ENCODE measurements at regions of chr2 and their contacts with region 1.

Region 1: GRCh38 chr2:235766278-235766677 is 272.4 kb downstream of the AGAP1 start:
- DNase-seq: peak in 4 of 5 donors; percentile 77 to 94 (median 85)
- H3K4me3 ChIP-seq: no peak overlapping the region
- H3K27ac ChIP-seq: no peak overlapping the region
- H3K4me1 ChIP-seq: no peaks in the 10 kb centered on the region
- H3K27me3 ChIP-seq: no peaks in the 10 kb centered on the region
- CTCF ChIP-seq: peak; percentile 92

Region 2: GRCh38 chr2:236177967-236178899 is 412.0 kb after region 1 on chr2:
- intact Hi-C with region 1: loop called (anchors 5 kb)
- DNase-seq: peak; percentile 79 to 89 (median 85)
- H3K4me3 ChIP-seq: peak overlapping the region; percentile 18 to 42 (median 41)
- H3K27ac ChIP-seq: no peak overlapping the region
- H3K4me1 ChIP-seq: peaks cover 0 to 2% (median 0%) of the 10 kb centered on the region in 3 donors
- H3K27me3 ChIP-seq: peaks cover 34% of the 10 kb centered on the region
- CTCF ChIP-seq: peak; percentile 60

Measured in kidney (tissue), 22 donors.